Esophagus muscularis mucosa (tissue), 4 donors: ENCODE measurements at regions of chr4 and their contacts with region 1.

Region 1: GRCh38 chr4:89110986-89111832 is at the start of gene TIGD2:
- DNase-seq: peak; percentile 94
- H3K4me3 ChIP-seq: peak within 1 kb of the TSS; percentile 88 to 92 (median 90)
- H3K27ac ChIP-seq: peak within 1 kb of the TSS; percentile 82 to 86 (median 86)
- H3K4me1 ChIP-seq: peaks cover 15 to 20% (median 18%) of the 10 kb centered on the region in 4 donors
- H3K27me3 ChIP-seq: no peaks in the 10 kb centered on the region
- CTCF ChIP-seq: peak; percentile 71 to 86 (median 80)
- EP300 ChIP-seq: no peak
- POLR2A ChIP-seq: peak; percentile 40
- total RNA-seq, gene TIGD2: 2.1 to 2.5 (median 2.4) TPM

Region 2: DNA sequence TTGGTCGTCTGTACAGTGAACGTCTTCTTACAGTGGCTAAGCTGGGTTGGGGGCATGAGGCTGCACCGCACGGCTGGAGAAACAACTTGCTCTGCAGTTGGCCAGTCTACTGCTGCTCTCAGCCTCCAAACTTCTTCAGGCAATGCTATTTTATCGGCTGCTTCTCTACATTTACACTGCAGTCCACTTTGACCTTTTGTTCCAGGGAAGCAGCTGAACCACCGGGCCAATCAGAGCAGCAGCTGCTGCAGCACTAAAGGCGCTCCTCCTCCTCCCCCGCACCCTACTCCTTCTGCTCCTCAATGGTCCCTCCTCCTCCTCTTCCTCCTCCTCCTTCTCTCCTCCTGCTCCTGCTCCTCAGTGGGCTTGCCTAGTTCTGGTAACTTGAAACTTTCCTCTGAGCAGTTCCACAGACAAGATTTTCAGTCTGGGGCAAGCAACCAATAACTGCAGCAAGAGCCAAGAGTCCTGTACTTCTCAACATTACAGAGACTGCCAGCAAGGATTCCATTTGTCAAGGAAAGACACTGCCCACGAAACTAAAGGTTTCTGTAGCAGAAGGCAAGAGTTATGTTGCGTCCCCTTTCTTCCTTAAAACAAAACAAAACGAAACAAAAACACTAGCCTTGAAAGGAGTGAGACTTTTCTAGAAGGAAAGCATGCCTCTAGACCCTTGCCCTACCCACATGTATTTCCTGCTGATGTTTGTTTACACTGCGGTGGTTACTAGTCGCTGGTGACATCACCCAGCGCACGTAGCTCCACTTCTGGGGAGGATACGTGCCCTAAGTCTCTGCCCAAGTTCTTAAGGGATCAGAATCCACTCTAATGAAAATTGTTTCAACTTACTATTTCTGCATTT is 287.9 kb before region 1 on chr4:
- intact Hi-C with region 1: loop called (anchors 5 kb)
- DNase-seq: peak; percentile 94
- H3K4me3 ChIP-seq: peak overlapping the region; percentile 50 to 66 (median 58)
- H3K27ac ChIP-seq: peak overlapping the region; percentile 85 to 87 (median 86)
- H3K4me1 ChIP-seq: peaks cover 23 to 51% (median 48%) of the 10 kb centered on the region in 4 donors
- H3K27me3 ChIP-seq: no peaks in the 10 kb centered on the region
- CTCF ChIP-seq: no peak
- EP300 ChIP-seq: no peak
- POLR2A ChIP-seq: peak; percentile 49

Region 3: GRCh38 chr4:89054627-89055026 is 56.6 kb before region 1 on chr4:
- intact Hi-C with region 1: loop called (anchors 1 kb)
- DNase-seq: no peak
- H3K4me3 ChIP-seq: peak overlapping the region in 1 of 4 donors; percentile 15
- H3K27ac ChIP-seq: no peak overlapping the region
- H3K4me1 ChIP-seq: peaks cover 7 to 40% (median 34%) of the 10 kb centered on the region in 4 donors
- H3K27me3 ChIP-seq: no peaks in the 10 kb centered on the region
- CTCF ChIP-seq: no peak
- EP300 ChIP-seq: no peak
- POLR2A ChIP-seq: no peak